ENCODE measurements at regions of chr16 and their contacts with region 1.

Region 1: DNA sequence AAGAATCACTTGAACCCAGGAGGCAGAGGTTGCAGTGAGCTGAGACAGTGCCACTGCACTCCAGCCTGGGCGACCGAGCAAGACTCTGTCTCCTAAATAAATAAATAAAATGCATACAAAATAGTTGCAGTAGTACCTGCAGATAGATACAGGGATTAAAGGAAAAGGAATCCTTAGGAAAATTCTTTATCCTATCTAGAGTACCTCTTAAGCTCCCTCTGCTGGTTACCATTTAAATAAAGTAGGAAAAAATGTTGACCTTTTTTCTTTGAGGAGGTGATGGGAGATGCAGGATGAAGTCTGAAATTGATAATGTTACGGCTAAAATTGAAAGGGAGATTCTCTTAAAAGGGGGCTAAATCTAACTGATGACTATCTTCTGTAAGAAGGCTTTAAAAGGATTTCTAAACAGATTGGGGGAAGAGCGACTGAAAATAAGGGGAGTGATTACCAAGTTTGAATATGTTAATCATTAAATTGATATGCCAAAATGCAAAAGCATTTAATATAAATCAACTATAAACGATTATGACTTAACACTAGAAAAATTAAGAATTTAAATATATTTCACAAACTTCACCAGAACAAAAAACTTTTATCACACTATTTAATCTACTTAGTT is 29.4 kb downstream of the C16orf87 start:
- DNase-seq: no peak
- H3K4me3 ChIP-seq: no peak overlapping the region
- H3K27ac ChIP-seq: no peak overlapping the region
- H3K4me1 ChIP-seq: no peaks in the 10 kb centered on the region
- H3K27me3 ChIP-seq: no peaks in the 10 kb centered on the region
- CTCF ChIP-seq: peak in 1 of 3 experiments; percentile 23; a peak in 2 of 4 replicates
- EP300 ChIP-seq: no peak
- POLR2A ChIP-seq: no peak
- RAD21 ChIP-seq: peak in 1 of 2 experiments; percentile 32; a peak in 2 of 4 replicates

Region 2: DNA sequence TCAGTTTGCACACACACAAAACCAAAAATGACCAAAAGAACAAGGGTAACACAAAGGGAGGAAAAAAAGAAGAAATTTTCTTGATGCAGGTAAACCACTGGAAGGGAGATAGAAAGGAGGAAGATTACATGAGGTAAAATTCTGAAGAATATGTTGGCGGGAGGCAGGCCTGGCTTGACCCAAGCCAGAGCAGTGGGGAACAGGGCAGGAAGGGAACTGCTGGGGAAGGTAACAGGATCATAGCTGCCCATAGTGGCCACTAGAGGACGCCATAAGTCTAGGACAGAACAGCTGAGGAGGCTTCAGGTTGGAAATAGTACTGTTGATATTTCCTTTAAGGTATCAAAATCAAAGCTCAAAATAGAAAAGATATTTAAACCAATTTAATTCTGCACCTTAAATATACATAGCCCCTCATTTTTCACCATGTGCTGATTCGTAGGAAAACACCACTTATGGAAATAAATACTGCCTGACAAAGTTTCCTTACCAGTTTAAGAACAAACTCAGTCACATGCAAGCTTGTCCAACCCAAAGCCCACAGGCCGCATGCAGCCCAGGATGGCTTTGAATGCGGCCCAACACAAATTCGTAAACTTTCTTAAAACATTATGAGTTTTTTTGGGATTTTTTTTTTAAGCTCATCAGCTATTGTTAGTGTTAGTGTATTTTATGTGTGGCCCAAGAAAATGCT is 128.1 kb before region 1 on chr16:
- CTCF ChIA-PET with region 1: interaction called, 35 read pairs
- POLR2A ChIA-PET with region 1: no interaction called
- DNase-seq: peak in 1 of 2 experiments; percentile 58
- H3K4me3 ChIP-seq: no peak overlapping the region
- H3K27ac ChIP-seq: no peak overlapping the region
- H3K4me1 ChIP-seq: no peaks in the 10 kb centered on the region
- H3K27me3 ChIP-seq: no peaks in the 10 kb centered on the region
- CTCF ChIP-seq: peak; percentile 89 to 97 (median 91)
- EP300 ChIP-seq: no peak
- POLR2A ChIP-seq: no peak
- RAD21 ChIP-seq: peak; percentile 87 to 89

Region 3: DNA sequence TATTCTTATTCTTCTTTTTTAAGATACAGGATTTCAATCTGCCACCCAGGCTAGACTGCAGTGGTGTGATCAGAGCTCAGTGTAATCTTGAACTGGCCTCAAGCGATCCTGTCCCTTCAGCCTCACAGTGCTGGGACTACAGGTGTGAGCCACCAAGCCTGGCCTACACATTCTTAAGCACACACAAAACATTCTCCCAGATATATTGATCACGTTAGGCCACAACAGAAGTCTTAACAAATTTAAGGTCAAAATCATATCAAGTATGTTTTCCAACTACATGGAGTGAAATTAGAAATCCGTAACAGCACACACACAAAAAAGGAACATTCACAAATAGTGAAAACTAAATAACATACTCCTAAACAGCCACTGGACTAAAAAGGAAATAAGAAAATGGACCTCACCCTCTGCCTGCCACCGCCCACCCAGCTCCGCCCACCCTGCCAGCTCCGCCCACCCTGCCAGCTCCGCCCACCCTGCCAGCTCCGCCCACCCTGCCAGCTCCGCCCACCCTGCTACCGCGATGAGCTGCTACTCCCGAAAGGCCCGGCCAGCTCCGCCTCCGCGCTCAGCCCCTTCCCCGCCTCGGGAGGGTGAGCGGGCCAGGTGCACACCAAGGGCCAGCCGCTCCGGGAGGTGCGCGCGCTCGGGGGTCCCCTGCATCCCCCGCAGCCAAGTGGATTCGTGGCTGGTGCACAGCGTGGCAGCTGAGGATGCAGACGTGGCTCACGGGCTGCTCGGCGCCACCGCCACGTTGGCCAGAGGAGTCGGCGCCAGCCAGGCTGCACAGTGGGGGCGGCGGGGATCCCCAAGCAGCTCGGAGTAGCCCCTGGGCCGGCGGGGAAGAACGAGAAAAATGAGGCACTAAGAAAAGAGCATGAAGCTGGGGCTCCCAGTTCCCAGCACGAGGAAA is 11.8 kb before region 1 on chr16:
- CTCF ChIA-PET with region 1: interaction called, 15 read pairs
- POLR2A ChIA-PET with region 1: interaction called, 7 read pairs
- DNase-seq: peak; percentile 44 to 90
- H3K4me3 ChIP-seq: peak overlapping the region; percentile 69 to 87 (median 76)
- H3K27ac ChIP-seq: peak overlapping the region; percentile 69; the same call in 1 of the 2 replicates
- H3K4me1 ChIP-seq: peaks cover 0 to 9% (median 6%) of the 10 kb centered on the region in 4 experiments; a peak in 6 of 7 replicates
- H3K27me3 ChIP-seq: no peaks in the 10 kb centered on the region
- CTCF ChIP-seq: no peak
- EP300 ChIP-seq: no peak
- POLR2A ChIP-seq: peak; percentile 79 to 90
- RAD21 ChIP-seq: no peak

Region 4: DNA sequence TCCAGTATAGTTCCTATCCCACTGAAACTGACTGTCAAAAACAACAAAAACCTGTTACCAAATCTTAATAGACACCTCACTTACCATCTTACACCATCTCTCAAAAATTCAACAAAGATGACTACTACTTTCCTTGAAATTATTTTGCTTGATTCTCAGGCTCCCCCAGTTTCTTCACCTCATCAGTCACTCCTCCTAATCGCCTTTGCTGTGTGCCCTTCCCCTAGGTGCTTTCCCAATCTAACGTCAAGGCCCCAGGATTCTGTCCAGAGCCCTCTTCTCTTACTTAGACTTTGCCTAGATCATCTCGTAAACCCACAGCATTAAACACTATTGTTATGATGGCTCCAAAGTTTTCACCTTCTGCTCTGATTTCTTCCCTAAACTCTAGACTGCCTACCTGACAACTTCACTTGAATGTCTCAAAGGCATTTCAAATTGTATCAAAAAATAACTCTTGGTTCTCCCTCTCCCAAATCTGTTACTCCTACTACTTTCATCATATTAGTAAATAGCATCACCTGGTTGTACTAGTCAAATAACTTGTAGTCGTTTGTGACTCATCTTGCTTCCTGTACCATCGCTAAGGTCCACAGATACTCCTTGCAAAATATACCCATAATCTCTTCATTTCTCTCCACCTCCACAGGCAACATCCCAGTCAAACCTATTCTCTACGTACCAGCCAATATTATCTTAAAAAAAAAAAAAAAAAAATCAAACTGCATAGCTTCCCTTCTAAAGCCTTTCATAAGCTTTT is 11.4 kb after region 1 on chr16:
- CTCF ChIA-PET with region 1: interaction called, 10 read pairs
- POLR2A ChIA-PET with region 1: interaction called, 4 read pairs
- DNase-seq: no peak
- H3K4me3 ChIP-seq: no peak overlapping the region
- H3K27ac ChIP-seq: no peak overlapping the region
- H3K4me1 ChIP-seq: no peaks in the 10 kb centered on the region
- H3K27me3 ChIP-seq: no peaks in the 10 kb centered on the region
- CTCF ChIP-seq: no peak
- EP300 ChIP-seq: no peak
- POLR2A ChIP-seq: no peak
- RAD21 ChIP-seq: no peak

Region 5: DNA sequence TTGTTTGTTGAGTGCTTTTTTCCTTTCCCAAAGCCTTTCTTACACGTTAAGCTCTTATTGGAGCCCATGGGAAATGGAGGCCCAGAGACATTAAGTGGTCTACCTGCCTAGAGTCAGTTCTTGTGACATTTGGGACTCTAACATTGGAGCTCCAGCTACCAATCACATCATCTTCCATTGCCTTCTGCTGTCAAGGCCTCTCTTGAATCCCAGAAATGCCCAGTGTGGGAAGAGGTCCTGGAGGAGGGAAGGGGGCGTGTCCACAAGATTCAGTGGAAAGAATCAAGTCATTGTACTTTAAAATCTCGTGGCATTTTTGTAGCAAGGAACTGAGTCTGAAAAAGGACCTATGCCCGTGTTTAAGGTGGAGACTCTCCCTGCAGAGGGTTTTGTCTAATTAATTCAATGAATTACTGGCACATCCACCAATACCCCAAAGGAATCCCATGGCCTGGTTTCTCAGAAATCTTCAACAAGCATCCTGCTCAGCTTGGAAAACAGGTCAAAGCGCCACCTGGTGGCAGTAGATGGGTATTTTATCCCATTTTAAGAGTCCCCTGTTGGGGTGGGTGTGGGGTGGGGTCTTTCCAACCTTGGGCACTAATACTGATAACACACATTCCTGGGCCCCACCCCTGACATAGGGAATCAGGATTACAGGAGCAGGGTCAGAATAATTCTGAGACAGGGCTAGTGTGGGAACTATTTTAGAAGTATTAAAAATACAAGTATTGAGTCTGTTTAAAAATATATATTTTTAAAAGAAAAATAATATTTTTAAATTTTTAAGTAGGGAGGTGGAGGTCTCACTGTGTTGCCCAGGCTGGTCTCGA is 107.2 kb after region 1 on chr16:
- CTCF ChIA-PET with region 1: no interaction called
- POLR2A ChIA-PET with region 1: no interaction called
- DNase-seq: peak; percentile 27 to 81
- H3K4me3 ChIP-seq: no peak overlapping the region
- H3K27ac ChIP-seq: no peak overlapping the region; the same call in 1 of the 2 replicates
- H3K4me1 ChIP-seq: no peaks in the 10 kb centered on the region
- H3K27me3 ChIP-seq: no peaks in the 10 kb centered on the region
- CTCF ChIP-seq: peak; percentile 26 to 82 (median 66)
- EP300 ChIP-seq: no peak
- POLR2A ChIP-seq: no peak
- RAD21 ChIP-seq: peak; percentile 60 to 75